Activated T-helper 1 cell treated with anti-CD3 and anti-CD28 coated beads, Interleukin-12 subunit alpha, Interleukin-12 subunit beta, Interleukin-2, Interleukin-4 antibody, amounts not matched to agents 30 ng/mL and 10 ng/mL and 1 ng/mL, durations not matched to agents 14 hours and 24 hours and 36 hours (primary cell): ENCODE measurements at regions of chr19 and their contacts with region 1.

Region 1: DNA sequence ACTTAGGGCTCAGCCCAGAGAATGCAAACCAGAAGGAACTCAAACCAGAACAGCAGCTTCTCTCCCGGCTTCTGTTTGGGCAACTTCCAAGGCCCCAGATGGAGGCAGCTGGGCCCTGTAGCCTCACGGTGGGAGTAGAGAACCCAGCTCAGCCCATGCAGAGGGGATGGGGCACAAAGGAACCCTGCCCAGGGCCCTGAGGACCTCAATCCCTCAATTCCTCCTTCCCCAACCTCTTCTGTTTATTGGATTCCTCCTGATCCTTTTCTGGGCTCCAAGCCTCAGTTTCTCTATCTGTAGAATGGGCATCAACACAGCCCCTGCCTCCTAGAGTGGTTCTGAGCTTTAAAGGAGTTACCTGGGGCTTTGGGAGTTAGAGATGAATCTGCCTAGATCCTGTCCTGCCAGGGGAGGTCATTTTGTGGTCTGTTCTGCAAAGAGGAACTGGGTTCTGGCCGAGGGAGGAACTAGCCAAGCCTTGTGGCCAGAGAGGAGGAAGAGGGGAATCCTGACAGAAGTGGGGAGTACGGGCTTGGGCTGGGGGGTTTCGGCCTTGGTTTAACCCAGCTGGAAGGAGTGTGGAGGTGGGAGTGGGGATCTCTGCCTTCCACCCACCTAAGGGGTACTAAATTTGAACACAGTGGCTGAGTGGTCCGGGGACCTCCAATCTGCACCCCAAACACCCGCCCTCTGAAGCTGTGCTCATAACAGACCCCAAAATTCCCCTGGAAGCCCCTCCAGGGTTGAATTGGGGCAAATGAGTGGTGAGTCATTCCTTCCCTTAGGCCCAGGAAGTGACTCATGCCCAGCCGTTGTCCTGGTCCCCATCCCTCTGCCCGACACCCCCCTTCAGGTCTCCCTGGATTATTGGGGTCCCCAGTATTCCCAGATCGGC is 2.7 kb downstream of the ADGRE5 start:
- DNase-seq: peak; percentile 58
- H3K4me3 Mint-ChIP-seq: peak overlapping the region; percentile 95
- H3K27ac Mint-ChIP-seq: peak overlapping the region; percentile 98
- H3K4me1 Mint-ChIP-seq: peaks cover 40% of the 10 kb centered on the region
- H3K27me3 Mint-ChIP-seq: no peaks in the 10 kb centered on the region

Region 2: DNA sequence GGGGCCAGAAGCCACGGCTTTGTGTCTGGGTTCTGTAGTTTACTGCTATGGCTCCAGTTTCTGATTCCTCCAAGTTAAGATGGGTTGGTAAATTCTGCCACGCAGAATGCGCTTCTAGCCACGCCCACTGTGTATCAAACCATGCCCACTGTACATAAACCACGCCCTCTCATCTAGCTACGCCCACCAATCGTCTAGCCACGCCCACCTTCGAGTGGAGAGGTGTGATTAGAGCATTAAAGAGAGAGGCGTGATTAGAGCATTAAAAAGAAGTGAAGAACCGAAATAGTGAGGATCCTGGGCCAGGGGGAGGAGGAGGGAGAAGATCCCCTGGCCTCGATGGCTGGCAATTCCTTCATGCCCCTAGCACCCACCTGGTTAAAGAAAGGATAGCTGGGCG is 46.4 kb before region 1 on chr19:
- intact Hi-C with region 1: loop called (anchors 2 kb)
- DNase-seq: no peak
- H3K4me3 Mint-ChIP-seq: no peak overlapping the region
- H3K27ac Mint-ChIP-seq: no peak overlapping the region
- H3K4me1 Mint-ChIP-seq: peaks cover 5% of the 10 kb centered on the region
- H3K27me3 Mint-ChIP-seq: peaks cover 4% of the 10 kb centered on the region

Region 3: GRCh38 chr19:14366498-14366915 is 17.4 kb before region 1 on chr19:
- intact Hi-C with region 1: loop called (anchors 1 kb)
- DNase-seq: peak; percentile 86
- H3K4me3 Mint-ChIP-seq: peak overlapping the region; percentile 74
- H3K27ac Mint-ChIP-seq: peak overlapping the region; percentile 97
- H3K4me1 Mint-ChIP-seq: peaks cover 80% of the 10 kb centered on the region
- H3K27me3 Mint-ChIP-seq: no peaks in the 10 kb centered on the region

Region 4: GRCh38 chr19:14419106-14419813 is 35.4 kb after region 1 on chr19 and contains the start of gene DDX39A:
- intact Hi-C with region 1: loop called (anchors 1 kb)
- DNase-seq: peak; percentile 98
- H3K4me3 Mint-ChIP-seq: peak within 1 kb of the TSS; percentile 98
- H3K27ac Mint-ChIP-seq: peak within 1 kb of the TSS; percentile 100
- H3K4me1 Mint-ChIP-seq: peaks cover 29% of the 10 kb centered on the region
- H3K27me3 Mint-ChIP-seq: no peaks in the 10 kb centered on the region
- total RNA-seq, gene DDX39A: 273 and 287 TPM in 2 replicates